ENCODE measurements at regions of chr4 and their contacts with region 1.

Region 1: DNA sequence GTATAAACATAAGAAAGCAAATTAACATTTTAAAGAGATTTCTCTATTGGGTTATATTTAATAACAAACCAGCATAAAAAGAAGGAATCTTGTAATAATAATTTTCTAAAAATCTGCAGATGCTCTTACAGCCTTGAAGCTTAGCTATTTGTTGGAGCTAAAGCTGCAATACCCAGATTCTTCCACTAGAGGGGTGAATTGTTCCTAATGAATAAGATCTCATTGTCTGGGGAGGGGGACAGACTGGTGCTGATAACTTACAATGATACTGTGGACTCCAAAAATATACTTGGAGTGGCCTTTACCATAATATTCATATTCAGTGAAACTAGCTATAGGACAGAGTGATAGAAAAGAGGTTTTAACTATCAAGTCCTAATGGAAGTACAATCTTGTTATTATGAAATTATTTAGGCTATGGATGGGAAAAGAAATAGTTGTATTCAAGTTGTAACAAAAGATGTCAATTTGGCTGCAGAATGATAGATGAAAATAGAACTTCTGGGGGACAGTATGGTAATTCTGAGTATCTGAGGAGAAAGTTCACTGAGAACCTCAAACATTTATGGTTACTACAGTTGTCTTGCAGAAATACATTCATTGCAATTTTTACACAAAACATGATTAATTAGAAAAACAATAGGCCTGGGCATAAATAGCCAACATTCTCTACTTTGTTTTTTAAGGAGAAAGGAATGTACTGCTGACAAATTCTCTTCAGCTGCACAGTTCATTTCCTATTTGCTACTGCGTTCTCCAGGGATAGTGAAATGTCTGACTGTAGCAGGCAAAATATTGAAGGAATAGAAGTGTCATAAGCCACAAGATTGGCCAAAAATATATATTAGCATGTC is 443.3 kb downstream of the GBA3 start:
- DNase-seq: no peak
- ATAC-seq: no peak

Region 2: GRCh38 chr4:22986881-22987280 is 149.1 kb before region 1 on chr4:
- intact Hi-C with region 1: no loop called
- DNase-seq: no peak
- ATAC-seq: no peak

Region 3: DNA sequence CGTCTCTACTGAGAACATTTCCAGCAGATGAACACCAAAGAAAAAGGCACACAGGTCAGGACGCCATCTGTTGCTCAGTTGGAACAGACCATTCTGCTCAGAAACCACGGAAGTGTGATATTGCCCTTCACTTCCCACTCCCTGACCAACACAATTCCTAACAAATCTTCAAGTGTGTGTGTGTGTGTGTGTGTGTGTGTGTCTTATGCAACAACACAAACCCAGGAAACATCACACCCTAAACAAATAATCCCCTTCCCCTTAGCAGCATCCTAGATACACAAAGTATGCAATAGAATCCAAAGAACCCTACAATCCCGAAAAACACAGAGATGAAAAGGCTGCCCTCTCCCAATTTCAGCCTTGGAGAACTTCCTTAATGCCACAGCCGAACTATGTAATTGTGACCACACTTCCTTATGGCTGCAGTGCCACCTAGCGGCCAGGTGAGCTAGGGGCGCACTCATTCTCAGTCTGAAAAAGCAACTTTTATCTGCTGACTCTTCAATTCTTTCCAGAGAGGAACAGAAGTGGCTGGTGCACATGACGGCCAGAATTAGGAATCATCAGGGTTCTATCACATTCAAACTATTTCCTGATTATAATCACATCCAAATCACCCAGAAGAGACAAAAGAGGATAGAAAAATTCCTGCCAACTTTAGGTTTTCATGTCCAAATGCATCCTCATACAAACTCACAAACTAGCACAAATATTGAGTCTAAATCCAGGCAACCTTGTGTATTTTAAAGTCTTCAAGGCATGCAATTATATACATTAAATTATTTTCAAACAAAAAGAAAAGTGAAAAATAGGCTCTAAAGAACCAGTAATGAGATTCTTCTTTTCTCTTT is 1283.4 kb after region 1 on chr4:
- intact Hi-C with region 1: loop called (anchors 10 kb)
- DNase-seq: peak; percentile 87
- ATAC-seq: peak; percentile 90